ENCODE measurements at regions of chr2 and their contacts with region 1.

Region 1: GRCh38 chr2:224357098-224357901 is 44.6 kb downstream of the FAM124B start:
- DNase-seq: peak in 1 of 2 donors; percentile 73
- H3K4me3 ChIP-seq: no peak overlapping the region
- H3K27ac ChIP-seq: no peak overlapping the region
- H3K4me1 ChIP-seq: no peaks in the 10 kb centered on the region
- H3K27me3 ChIP-seq: no peaks in the 10 kb centered on the region
- CTCF ChIP-seq: peak; percentile 67 to 81 (median 73)

Region 2: DNA sequence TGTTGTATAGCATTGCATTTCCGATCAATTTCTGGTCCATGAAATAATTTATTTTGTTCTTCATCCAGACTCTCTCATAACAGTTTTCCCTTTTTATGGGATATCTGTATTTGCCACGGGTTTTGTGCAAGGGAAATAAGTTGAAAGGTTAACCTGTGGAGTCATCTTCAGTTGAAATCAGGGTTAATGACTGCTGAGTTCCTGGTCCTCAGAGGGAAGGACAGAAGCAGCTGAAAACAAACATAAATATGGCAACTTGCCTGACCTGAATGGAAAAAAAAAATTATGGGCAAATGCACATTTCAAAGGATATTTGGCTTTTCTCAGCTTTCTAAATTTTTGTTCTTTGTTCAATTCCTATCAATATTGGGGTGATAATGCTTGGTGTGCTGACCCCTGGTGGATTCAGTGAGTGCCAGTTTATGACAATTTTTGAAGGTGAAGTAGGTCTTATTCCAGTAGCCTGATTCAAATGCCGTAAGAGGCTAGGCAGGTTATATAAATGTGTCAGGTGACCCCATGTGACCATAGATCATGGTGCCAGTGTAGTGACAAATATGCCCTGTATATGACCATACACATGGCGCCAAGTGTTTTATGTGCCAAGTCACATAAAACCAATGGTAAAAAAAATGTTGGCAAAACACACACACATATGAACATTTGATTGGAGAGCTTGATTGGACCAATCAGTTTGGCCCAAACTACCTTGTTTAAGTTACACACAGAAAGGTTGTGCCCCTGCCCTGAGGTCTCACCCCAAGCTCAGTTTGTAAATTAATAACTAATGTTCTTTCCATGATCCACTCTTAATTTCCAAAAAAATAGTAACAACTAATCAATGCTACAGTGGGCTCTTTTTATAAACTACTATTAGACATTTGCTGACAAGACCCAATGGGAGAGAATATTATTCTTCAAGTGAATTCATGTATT is 92.2 kb after region 1 on chr2:
- intact Hi-C with region 1: loop called (anchors 10 kb)
- DNase-seq: no peak
- H3K4me3 ChIP-seq: no peak overlapping the region
- H3K27ac ChIP-seq: no peak overlapping the region
- H3K4me1 ChIP-seq: no peaks in the 10 kb centered on the region
- H3K27me3 ChIP-seq: no peaks in the 10 kb centered on the region
- CTCF ChIP-seq: peak in 2 of 3 experiments; percentile 15 to 41

Region 3: DNA sequence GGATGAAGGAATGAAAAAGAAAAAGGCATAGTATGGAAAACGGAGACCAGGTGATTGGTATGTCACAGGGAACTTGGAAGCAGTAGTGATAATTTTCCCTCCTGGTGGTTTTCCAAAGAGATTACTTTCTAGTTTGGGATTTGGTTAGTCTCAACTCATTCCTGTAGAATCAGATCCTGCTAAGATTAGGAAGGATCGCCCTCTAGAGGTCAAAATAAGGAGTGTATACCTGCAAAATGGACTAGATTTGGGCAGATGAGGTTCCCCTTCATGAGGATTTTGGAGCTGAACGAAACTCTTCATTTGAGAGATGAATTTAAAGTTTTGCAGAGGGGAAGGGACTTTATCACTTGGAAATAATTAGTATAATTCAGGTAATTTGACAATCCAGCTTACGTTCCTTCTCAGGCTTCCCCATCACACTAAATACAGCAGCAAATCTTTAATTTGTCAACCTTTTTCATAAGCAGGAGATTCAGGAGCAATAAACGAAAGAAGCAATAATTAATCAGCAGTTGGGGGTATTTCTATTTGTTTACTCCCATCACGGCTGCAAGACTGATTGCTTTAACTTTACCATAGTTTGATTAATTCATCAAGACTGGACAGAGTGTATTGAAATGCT is 293.6 kb after region 1 on chr2:
- intact Hi-C with region 1: loop called (anchors 1 kb)
- DNase-seq: no peak
- H3K4me3 ChIP-seq: no peak overlapping the region
- H3K27ac ChIP-seq: no peak overlapping the region
- H3K4me1 ChIP-seq: no peaks in the 10 kb centered on the region
- H3K27me3 ChIP-seq: no peaks in the 10 kb centered on the region
- CTCF ChIP-seq: peak; percentile 68 to 86 (median 82)

Region 4: GRCh38 chr2:224778474-224778877 is 421.2 kb after region 1 on chr2:
- intact Hi-C with region 1: loop called (anchors 2 kb)
- DNase-seq: peak in 1 of 2 donors; percentile 74
- H3K4me3 ChIP-seq: no peak overlapping the region
- H3K27ac ChIP-seq: no peak overlapping the region
- H3K4me1 ChIP-seq: no peaks in the 10 kb centered on the region
- H3K27me3 ChIP-seq: no peaks in the 10 kb centered on the region
- CTCF ChIP-seq: peak; percentile 33 to 72 (median 70)

Measured in ascending aorta (tissue), 2 donors.